ENCODE measurements at regions of chr9 and their contacts with region 1.

Region 1: DNA sequence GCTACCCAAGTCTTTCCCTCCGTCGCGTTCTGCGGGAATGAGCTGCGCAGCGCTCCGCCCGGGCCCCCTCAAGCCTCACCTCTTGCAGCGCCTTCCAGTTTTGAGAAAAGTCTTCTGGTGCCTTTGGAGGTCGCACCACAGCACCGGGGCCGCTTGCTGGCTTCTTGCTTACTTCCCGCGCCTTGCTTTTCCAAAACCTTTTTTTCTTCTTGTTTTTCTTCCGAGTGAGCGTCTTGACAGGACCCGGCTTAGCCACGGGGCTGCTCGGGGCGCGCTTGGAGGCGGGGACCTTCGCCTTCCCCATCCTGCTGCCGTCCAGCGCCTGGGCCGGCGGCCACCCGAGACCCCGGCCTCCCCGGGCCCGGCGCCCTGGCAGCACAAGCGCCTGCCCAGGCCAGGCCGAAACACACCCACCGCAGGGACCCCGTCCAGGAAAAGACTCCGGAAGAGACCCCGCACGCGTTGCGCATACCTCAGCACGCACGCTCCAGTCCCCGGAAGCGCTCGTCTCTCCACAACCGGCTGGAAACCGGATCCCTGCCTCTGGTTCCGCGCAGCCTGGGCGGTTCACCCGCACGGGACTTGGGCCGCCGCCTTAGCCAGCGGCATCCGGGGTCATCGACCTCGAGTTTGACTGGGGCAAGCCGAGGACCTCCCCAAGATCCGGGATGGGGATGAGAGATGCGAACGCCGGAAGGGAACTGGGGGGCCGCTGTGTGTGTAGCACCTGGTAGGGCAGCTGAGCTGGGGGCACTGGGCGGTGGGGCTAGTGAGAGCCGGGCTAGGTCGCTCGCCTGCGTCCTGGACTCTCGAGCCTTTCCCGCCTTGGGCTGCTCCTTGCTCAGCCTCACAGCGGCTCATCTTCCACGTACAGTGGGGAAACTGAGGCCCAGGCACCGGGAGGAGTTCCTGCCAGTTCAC is at the start of gene REXO4:
- DNase-seq: peak; percentile 85 to 92
- ATAC-seq: peak; percentile 93
- H3K4me3 ChIP-seq: peak within 1 kb of the TSS; percentile 61
- H3K27ac ChIP-seq: peak within 1 kb of the TSS in 1 of 2 donors; percentile 18
- H3K4me1 ChIP-seq: no peaks in the 10 kb centered on the region
- H3K27me3 ChIP-seq: no peaks in the 10 kb centered on the region
- total RNA-seq, gene REXO4: 10.8 to 19.1 TPM

Region 2: DNA sequence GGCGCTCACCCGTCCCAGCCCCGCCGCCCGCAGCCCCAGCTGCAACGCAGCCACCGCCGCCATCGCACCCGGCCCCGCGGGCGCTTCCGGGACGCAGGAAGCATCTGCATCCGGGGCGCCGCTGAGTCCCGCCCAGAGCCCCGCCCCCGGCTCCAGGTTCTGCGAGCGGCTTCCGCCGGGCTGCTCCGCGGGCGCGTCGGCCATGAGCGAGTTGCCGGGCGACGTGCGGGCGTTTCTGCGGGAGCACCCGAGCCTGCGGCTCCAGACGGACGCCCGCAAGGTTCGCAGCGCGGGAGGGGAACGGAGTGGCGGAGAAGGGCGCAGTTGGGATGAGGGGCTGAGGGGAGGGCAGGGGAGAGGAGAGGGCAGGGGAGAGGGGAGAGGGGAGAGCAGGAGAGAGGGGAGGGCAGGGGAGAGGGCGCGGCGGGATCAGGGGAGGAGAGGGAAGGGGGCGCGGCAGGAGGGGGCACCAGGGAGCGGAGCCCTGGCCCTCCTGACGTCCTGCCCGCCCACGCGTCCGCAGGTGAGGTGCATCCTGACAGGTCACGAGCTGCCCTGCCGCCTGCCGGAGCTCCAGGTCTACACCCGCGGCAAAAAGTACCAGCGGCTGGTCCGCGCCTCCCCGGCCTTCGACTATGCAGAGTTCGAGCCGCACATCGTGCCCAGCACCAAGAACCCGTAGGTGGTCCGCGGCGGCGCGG is 61.3 kb before region 1 on chr9 and contains the starts of genes SURF1 and SURF2:
- intact Hi-C with region 1: loop called (anchors 5 to 10 kb)
- DNase-seq: peak; percentile 93 to 96
- ATAC-seq: peak; percentile 92
- H3K4me3 ChIP-seq: peak within 1 kb of the TSS; percentile 88 to 92
- H3K27ac ChIP-seq: peak within 1 kb of the TSS in 1 of 2 donors; percentile 42
- H3K4me1 ChIP-seq: no peaks in the 10 kb centered on the region
- H3K27me3 ChIP-seq: no peaks in the 10 kb centered on the region
- total RNA-seq, gene SURF1: 29.2 to 41.2 TPM
- total RNA-seq, gene SURF2: 9.2 to 9.9 TPM

Region 3: GRCh38 chr9:133371261-133371711 is 46.5 kb before region 1 on chr9:
- intact Hi-C with region 1: no loop called
- DNase-seq: no peak
- ATAC-seq: no peak
- H3K4me3 ChIP-seq: no peak overlapping the region
- H3K27ac ChIP-seq: no peak overlapping the region
- H3K4me1 ChIP-seq: no peaks in the 10 kb centered on the region
- H3K27me3 ChIP-seq: no peaks in the 10 kb centered on the region

Region 4: GRCh38 chr9:133459476-133460404 is 41.9 kb after region 1 on chr9 and contains the start of gene CACFD1:
- intact Hi-C with region 1: loop called in 1 of 2 experiments (anchors 5 kb)
- DNase-seq: peak; percentile 97 to 99
- ATAC-seq: peak; percentile 94
- H3K4me3 ChIP-seq: peak within 1 kb of the TSS; percentile 59 to 65
- H3K27ac ChIP-seq: peak within 1 kb of the TSS; percentile 43 to 74
- H3K4me1 ChIP-seq: no peaks in the 10 kb centered on the region
- H3K27me3 ChIP-seq: no peaks in the 10 kb centered on the region
- total RNA-seq, gene CACFD1: 11.5 to 15.9 TPM

Region 5: GRCh38 chr9:133478851-133479711 is 61.3 kb after region 1 on chr9 and contains the start of gene SLC2A6:
- intact Hi-C with region 1: loop called in 1 of 2 experiments (anchors 5 kb)
- DNase-seq: peak; percentile 90 to 96
- ATAC-seq: peak; percentile 94
- H3K4me3 ChIP-seq: peak within 1 kb of the TSS in 1 of 2 donors; percentile 24
- H3K27ac ChIP-seq: no peak within 1 kb of the TSS
- H3K4me1 ChIP-seq: no peaks in the 10 kb centered on the region
- H3K27me3 ChIP-seq: no peaks in the 10 kb centered on the region
- total RNA-seq, gene SLC2A6: 3.3 to 5.8 TPM

Region 6: GRCh38 chr9:133609311-133610098 is 191.7 kb after region 1 on chr9 and contains the start of gene FAM163B:
- intact Hi-C with region 1: no loop called
- DNase-seq: peak in 1 of 2 donors; percentile 85
- ATAC-seq: peak; percentile 70
- H3K4me3 ChIP-seq: no peak within 1 kb of the TSS
- H3K27ac ChIP-seq: no peak within 1 kb of the TSS
- H3K4me1 ChIP-seq: no peaks in the 10 kb centered on the region
- H3K27me3 ChIP-seq: no peaks in the 10 kb centered on the region
- total RNA-seq, gene FAM163B: not detected

Region 7: DNA sequence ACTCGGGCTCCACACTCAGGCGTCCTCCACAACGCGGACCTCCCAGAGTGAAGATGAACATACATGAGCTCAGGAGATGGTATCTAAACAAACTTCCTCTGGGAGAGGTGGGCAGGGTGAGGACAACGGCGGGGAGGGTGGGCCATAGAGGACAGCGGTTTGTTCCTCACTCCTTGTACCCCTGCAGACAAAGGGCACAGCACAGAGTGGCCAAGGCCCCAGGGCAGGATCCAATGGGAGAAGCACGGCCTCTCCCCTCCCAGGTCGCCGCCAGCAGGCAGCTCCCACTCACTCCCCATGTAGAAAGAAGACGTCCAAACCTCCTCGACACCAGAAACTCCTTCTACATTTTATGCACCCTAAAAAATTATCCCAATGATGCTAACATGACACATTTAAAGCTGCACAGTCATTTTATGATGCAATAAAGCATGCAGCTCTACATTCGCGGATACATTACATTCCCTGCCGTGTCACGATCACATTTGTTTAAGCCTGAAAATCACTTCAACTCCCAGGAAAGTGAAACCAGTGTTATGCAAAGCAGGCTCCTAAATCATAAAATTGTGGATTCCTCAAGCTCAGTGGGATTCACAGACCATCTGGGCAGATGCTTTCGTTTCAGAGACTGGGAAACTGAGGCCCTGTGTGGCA is 407.9 kb after region 1 on chr9:
- intact Hi-C with region 1: no loop called
- DNase-seq: no peak
- ATAC-seq: no peak
- H3K4me3 ChIP-seq: no peak overlapping the region
- H3K27ac ChIP-seq: no peak overlapping the region
- H3K4me1 ChIP-seq: no peaks in the 10 kb centered on the region
- H3K27me3 ChIP-seq: no peaks in the 10 kb centered on the region

Measured in aorta (tissue), 5 donors.